CD4-positive, alpha-beta T cell (primary cell): ENCODE measurements at regions of chr1 and their contacts with region 1.

Region 1: GRCh38 chr1:19462781-19463503 is 22.4 kb downstream of the CAPZB start:
- DNase-seq: peak; percentile 55 to 91 (median 69)
- ATAC-seq: peak; percentile 78
- H3K4me3 ChIP-seq: peak overlapping the region; percentile 24
- H3K4me3 Mint-ChIP-seq: peak overlapping the region; percentile 81
- H3K27ac ChIP-seq: peak overlapping the region; percentile 42 to 93
- H3K27ac Mint-ChIP-seq: peak overlapping the region; percentile 86
- H3K4me1 ChIP-seq: peaks cover 100% of the 10 kb centered on the region
- H3K4me1 Mint-ChIP-seq: peaks cover 88% of the 10 kb centered on the region
- H3K27me3 ChIP-seq: no peaks in the 10 kb centered on the region
- H3K27me3 Mint-ChIP-seq: no peaks in the 10 kb centered on the region
- CTCF ChIP-seq: no peak

Region 2: DNA sequence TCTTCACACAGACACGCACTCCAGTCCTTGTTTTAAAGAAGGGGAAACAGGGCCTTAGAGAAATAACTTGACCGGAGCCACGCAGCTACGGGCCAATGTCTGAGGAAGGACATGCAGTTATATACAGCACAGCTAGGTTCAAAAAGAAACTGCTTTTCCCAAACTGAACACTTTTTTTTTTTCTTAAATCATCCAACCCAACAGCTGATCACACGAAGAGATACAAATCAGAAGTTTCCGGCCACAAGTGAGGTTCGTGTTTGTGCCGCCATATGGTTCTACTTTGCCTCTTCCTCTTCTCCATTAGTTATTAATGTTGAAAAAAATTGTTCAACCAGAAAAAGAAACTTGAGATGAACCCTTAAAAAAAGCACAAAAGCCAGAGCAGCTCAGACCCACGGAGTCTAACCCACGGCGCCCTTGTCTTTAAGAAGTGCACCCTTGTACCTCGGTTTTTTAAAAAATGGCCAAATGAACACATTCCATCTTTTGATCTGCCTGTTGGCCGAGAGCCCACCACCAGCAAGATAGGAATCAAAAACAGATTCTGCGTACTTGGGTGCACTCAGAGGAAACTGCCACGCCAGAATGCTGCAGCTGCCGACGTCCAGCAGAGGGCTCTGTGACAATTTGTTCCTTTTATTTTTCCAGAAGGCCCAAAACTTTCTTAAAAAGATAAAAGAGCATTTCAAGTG is 71.9 kb before region 1 on chr1:
- CTCF ChIA-PET with region 1: interaction called, 6 read pairs
- POLR2A ChIA-PET with region 1: interaction called, 15 read pairs
- intact Hi-C with region 1: loop called (anchors 2 to 5 kb)
- DNase-seq: peak; percentile 31 to 91 (median 62)
- ATAC-seq: peak; percentile 76
- H3K4me3 ChIP-seq: peak overlapping the region; percentile 51
- H3K4me3 Mint-ChIP-seq: peak overlapping the region; percentile 92
- H3K27ac ChIP-seq: peak overlapping the region; percentile 46 to 62
- H3K27ac Mint-ChIP-seq: peak overlapping the region; percentile 94
- H3K4me1 ChIP-seq: peaks cover 92% of the 10 kb centered on the region
- H3K4me1 Mint-ChIP-seq: peaks cover 86% of the 10 kb centered on the region
- H3K27me3 ChIP-seq: no peaks in the 10 kb centered on the region
- H3K27me3 Mint-ChIP-seq: no peaks in the 10 kb centered on the region
- CTCF ChIP-seq: peak; percentile 90

Region 3: DNA sequence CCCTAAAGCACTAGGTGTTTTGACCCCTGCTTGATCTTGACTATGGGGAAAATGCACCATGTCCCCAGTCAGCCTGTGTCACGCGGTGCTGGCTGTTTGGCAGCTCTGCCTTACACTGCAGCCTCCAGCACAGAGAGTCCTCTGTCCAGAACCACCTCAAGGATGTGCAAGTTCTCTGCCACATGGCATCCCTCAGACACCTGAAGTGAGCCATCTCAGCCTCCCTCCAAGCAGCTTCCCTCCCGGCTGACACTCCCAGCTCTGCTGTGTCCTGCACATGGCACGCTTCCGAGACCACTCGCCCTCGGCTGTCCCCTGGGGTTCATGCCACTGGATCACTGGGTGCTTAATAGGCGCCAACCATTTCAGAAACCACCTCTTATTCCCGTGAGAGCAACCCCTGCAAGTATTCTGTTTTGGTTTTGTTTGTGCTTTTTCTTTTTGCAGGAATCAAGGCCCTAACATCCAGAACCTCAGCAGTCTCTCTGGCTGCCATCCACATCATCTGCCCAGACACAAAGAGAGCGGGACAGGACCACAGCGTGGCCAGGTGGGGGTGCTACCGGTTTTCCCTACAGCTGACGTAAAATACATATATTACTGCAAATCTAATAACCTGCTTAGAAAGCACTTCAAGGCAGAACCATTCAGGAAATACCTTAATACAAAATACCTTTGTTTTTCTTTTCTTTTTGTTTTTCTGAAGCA is 23.3 kb before region 1 on chr1:
- CTCF ChIA-PET with region 1: no interaction called
- POLR2A ChIA-PET with region 1: interaction called, 14 read pairs
- intact Hi-C with region 1: loop called in 1 of 2 experiments (anchors 2 kb)
- DNase-seq: peak; percentile 21 to 71 (median 47)
- ATAC-seq: peak; percentile 72
- H3K4me3 ChIP-seq: no peak overlapping the region
- H3K4me3 Mint-ChIP-seq: peak overlapping the region; percentile 52
- H3K27ac ChIP-seq: peak overlapping the region in 1 of 2 donors; percentile 26
- H3K27ac Mint-ChIP-seq: peak overlapping the region; percentile 76
- H3K4me1 ChIP-seq: peaks cover 87% of the 10 kb centered on the region
- H3K4me1 Mint-ChIP-seq: peaks cover 94% of the 10 kb centered on the region
- H3K27me3 ChIP-seq: no peaks in the 10 kb centered on the region
- H3K27me3 Mint-ChIP-seq: no peaks in the 10 kb centered on the region
- CTCF ChIP-seq: peak; percentile 54

Region 4: GRCh38 chr1:19448491-19449439 is 14.2 kb before region 1 on chr1:
- CTCF ChIA-PET with region 1: interaction called, 7 read pairs
- POLR2A ChIA-PET with region 1: interaction called, 4 read pairs
- intact Hi-C with region 1: loop called in 1 of 2 experiments (anchors 2 kb)
- DNase-seq: peak in 3 of 14 experiments; percentile 19 to 55 (median 47)
- ATAC-seq: no peak
- H3K4me3 ChIP-seq: no peak overlapping the region
- H3K4me3 Mint-ChIP-seq: peak overlapping the region; percentile 54
- H3K27ac ChIP-seq: no peak overlapping the region
- H3K27ac Mint-ChIP-seq: peak overlapping the region; percentile 89
- H3K4me1 ChIP-seq: peaks cover 78% of the 10 kb centered on the region
- H3K4me1 Mint-ChIP-seq: peaks cover 88% of the 10 kb centered on the region
- H3K27me3 ChIP-seq: no peaks in the 10 kb centered on the region
- H3K27me3 Mint-ChIP-seq: no peaks in the 10 kb centered on the region
- CTCF ChIP-seq: no peak

Region 5: GRCh38 chr1:19477284-19478249 is 14.6 kb after region 1 on chr1:
- CTCF ChIA-PET with region 1: interaction called, 3 read pairs
- POLR2A ChIA-PET with region 1: interaction called, 442 read pairs
- intact Hi-C with region 1: loop called (anchors 2 kb)
- DNase-seq: peak in 5 of 14 experiments; percentile 26 to 83 (median 57)
- ATAC-seq: peak; percentile 59
- H3K4me3 ChIP-seq: peak overlapping the region; percentile 41
- H3K4me3 Mint-ChIP-seq: peak overlapping the region; percentile 89
- H3K27ac ChIP-seq: peak overlapping the region; percentile 74 to 81
- H3K27ac Mint-ChIP-seq: peak overlapping the region; percentile 86
- H3K4me1 ChIP-seq: peaks cover 99% of the 10 kb centered on the region
- H3K4me1 Mint-ChIP-seq: peaks cover 95% of the 10 kb centered on the region
- H3K27me3 ChIP-seq: no peaks in the 10 kb centered on the region
- H3K27me3 Mint-ChIP-seq: no peaks in the 10 kb centered on the region
- CTCF ChIP-seq: no peak